ENCODE measurements at regions of chr19 and their contacts with region 1.

Region 1: GRCh38 chr19:39474139-39474622 is 6.5 kb upstream of the TIMM50 start:
- DNase-seq: peak; percentile 16 to 92 (median 50)
- ATAC-seq: peak; percentile 76
- H3K4me3 ChIP-seq: no peak overlapping the region
- H3K27ac ChIP-seq: no peak overlapping the region
- H3K4me1 ChIP-seq: peaks cover 0 to under 1% of the 10 kb centered on the region in 2 donors
- H3K27me3 ChIP-seq: no peaks in the 10 kb centered on the region
- CTCF ChIP-seq: peak; percentile 55 to 73

Region 2: GRCh38 chr19:39532233-39533002 is 58.2 kb after region 1 on chr19 and contains the start of gene EID2B:
- intact Hi-C with region 1: loop called in 1 of 2 experiments (anchors 10 kb)
- DNase-seq: peak; percentile 96 to 99 (median 98)
- ATAC-seq: peak; percentile 99
- H3K4me3 ChIP-seq: peak within 1 kb of the TSS; percentile 84 to 87
- H3K27ac ChIP-seq: peak within 1 kb of the TSS; percentile 78 to 86
- H3K4me1 ChIP-seq: peaks cover 3 to 12% of the 10 kb centered on the region in 2 donors
- H3K27me3 ChIP-seq: no peaks in the 10 kb centered on the region
- CTCF ChIP-seq: peak; percentile 96 to 97
- polyA plus RNA-seq, gene EID2B: 3.8 to 5.6 (median 4.8) TPM